Activated naive CD4-positive, alpha-beta T cell treated with anti-CD3 and anti-CD28 coated beads, Interleukin-2, amount 10 ng/mL, durations not matched to agents 7 days and 5 days (primary cell): ENCODE measurements at regions of chr16 and their contacts with region 1.

Region 1: GRCh38 chr16:24253192-24253591 is 2.9 kb upstream of the CACNG3 start:
- DNase-seq: peak; percentile 40
- H3K4me3 Mint-ChIP-seq: no peak overlapping the region
- H3K27ac Mint-ChIP-seq: no peak overlapping the region
- H3K4me1 Mint-ChIP-seq: peaks cover 2% of the 10 kb centered on the region
- H3K27me3 Mint-ChIP-seq: peaks cover 31% of the 10 kb centered on the region

Region 2: DNA sequence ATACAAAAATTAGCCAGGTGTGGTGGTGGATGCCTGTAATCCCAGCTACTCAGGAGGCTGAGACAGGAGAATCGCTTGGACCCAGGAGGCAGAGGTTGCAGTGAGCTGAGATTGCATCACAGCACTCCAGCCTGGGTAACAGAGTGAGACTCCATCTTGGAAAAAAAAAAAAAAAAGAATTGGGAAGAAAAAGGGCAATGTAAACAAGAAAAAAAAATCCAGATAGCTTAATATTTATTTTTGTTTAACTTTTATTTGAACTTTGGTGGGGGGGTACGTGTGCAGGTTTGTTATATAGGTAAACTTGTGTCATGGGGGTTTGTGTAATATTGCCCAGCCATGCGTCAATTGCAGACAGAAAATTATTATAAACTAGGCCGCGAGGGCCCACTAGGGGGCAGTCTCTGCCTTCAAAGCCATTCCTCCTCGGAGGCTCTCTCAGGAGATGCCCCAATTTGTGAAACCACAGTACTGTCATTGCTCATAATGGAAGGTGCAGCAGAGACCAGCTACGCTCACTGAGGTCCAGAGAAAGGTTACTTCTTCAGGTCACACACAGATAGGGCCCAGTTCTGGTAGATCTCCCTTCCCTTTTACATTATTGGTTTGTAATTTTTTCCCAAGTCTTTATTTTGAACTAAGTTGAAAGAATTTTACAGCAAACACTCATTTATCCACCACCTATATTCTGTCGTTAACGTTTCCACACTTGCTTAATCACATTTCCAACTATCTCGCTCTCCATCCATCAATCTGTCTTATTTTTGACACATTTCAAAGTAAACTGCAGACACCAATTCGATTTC is 211.2 kb before region 1 on chr16:
- CTCF ChIA-PET with region 1: interaction called, 26 read pairs
- DNase-seq: peak; percentile 82
- H3K4me3 Mint-ChIP-seq: no peak overlapping the region
- H3K27ac Mint-ChIP-seq: no peak overlapping the region
- H3K4me1 Mint-ChIP-seq: peaks cover 3% of the 10 kb centered on the region
- H3K27me3 Mint-ChIP-seq: no peaks in the 10 kb centered on the region

Region 3: GRCh38 chr16:24070851-24071250 is 182.3 kb before region 1 on chr16:
- CTCF ChIA-PET with region 1: interaction called, 40 read pairs
- DNase-seq: peak; percentile 32
- H3K4me3 Mint-ChIP-seq: no peak overlapping the region
- H3K27ac Mint-ChIP-seq: no peak overlapping the region
- H3K4me1 Mint-ChIP-seq: peaks cover 13% of the 10 kb centered on the region
- H3K27me3 Mint-ChIP-seq: no peaks in the 10 kb centered on the region